ENCODE measurements at regions of chr6 and their contacts with region 1.

Region 1: GRCh38 chr6:26031595-26032339 is 55.5 kb upstream of the HFE start:
- DNase-seq: peak; percentile 80
- ATAC-seq: peak; percentile 67
- H3K4me3 Mint-ChIP-seq: peak overlapping the region; percentile 91
- H3K27ac Mint-ChIP-seq: peak overlapping the region; percentile 100
- H3K4me1 Mint-ChIP-seq: peaks cover 59% of the 10 kb centered on the region
- H3K27me3 Mint-ChIP-seq: no peaks in the 10 kb centered on the region
- CTCF ChIP-seq: no peak

Region 2: DNA sequence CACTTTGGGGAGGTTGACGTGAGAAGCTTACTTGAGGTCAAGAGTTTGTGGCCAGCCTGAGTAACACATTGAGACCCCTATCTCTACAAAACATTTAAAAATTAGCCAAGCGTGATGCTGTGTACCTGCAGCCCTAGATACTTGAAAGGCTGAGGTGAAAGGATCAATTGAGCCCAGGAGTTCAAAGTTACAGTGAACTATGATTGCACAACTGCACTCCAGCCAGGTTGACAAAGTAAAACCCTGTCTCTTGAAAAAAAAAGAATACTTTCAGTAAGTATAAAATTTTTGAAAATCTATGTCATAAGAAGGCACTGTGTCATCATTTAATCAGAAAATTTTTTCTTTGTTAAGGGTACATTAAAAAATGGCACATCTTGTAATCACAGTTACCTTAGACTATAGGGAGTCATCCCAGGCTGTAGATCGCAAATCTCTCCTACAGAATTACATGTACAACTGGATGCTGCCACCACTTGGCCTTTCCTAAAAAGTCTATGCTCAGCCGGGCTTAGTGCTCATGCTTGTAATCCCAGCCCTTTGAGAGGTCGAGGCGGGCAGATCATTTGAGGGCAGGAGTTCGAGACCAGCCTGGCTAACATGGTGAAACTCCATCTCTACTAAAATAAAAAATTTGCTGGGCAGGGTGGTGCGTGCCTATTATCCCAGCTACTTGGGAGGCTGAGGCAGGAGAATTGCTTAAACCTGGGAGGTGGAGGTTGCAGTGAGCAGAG is 1646.1 kb before region 1 on chr6:
- CTCF ChIA-PET with region 1: no interaction called
- POLR2A ChIA-PET with region 1: no interaction called
- DNase-seq: no peak
- ATAC-seq: no peak
- H3K4me3 Mint-ChIP-seq: no peak overlapping the region
- H3K27ac Mint-ChIP-seq: no peak overlapping the region
- H3K4me1 Mint-ChIP-seq: no peaks in the 10 kb centered on the region
- H3K27me3 Mint-ChIP-seq: no peaks in the 10 kb centered on the region
- CTCF ChIP-seq: no peak

Region 3: GRCh38 chr6:26045065-26045927 is 13.5 kb after region 1 on chr6:
- CTCF ChIA-PET with region 1: interaction called, 5 read pairs
- POLR2A ChIA-PET with region 1: interaction called, 365 read pairs
- DNase-seq: peak; percentile 43
- ATAC-seq: peak; percentile 22; the same call in 1 of the 2 replicates
- H3K4me3 Mint-ChIP-seq: peak overlapping the region; percentile 64
- H3K27ac Mint-ChIP-seq: peak overlapping the region; percentile 95
- H3K4me1 Mint-ChIP-seq: peaks cover 42% of the 10 kb centered on the region
- H3K27me3 Mint-ChIP-seq: no peaks in the 10 kb centered on the region
- CTCF ChIP-seq: no peak

Region 4: DNA sequence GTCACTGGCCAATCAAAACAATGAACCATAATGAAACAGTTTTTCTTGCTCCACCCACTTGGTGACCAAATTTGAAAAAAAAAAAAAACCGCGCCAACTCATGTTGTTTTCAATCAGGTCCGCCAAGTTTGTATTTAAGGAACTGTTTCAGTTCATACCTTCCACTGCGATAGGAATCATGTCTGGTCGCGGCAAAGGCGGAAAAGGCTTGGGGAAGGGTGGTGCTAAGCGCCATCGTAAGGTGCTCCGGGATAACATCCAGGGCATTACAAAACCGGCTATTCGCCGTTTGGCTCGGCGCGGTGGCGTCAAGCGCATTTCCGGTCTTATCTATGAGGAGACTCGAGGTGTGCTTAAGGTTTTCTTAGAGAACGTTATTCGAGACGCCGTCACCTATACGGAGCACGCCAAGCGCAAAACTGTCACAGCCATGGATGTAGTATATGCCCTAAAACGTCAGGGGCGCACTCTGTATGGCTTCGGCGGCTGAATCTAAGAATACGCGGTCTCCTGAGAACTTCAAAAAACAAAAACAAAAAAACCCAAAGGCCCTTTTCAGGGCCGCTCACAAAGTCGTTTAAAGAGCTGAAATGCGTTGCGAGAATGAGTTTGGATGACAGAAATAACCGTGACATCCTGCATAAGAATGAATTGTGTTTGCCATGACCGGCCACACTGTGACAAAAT is 72.1 kb after region 1 on chr6:
- CTCF ChIA-PET with region 1: no interaction called
- POLR2A ChIA-PET with region 1: interaction called, 57 read pairs
- DNase-seq: peak; percentile 73
- ATAC-seq: peak; percentile 79
- H3K4me3 Mint-ChIP-seq: peak overlapping the region; percentile 84
- H3K27ac Mint-ChIP-seq: peak overlapping the region; percentile 98
- H3K4me1 Mint-ChIP-seq: peaks cover 23% of the 10 kb centered on the region
- H3K27me3 Mint-ChIP-seq: no peaks in the 10 kb centered on the region
- CTCF ChIP-seq: no peak

Region 5: GRCh38 chr6:27809939-27810767 is 1778.4 kb after region 1 on chr6:
- CTCF ChIA-PET with region 1: no interaction called
- POLR2A ChIA-PET with region 1: interaction called, 49 read pairs
- DNase-seq: peak; percentile 58
- ATAC-seq: peak; percentile 7
- H3K4me3 Mint-ChIP-seq: peak overlapping the region; percentile 98
- H3K27ac Mint-ChIP-seq: peak overlapping the region; percentile 98
- H3K4me1 Mint-ChIP-seq: peaks cover 45% of the 10 kb centered on the region
- H3K27me3 Mint-ChIP-seq: peaks cover 3% of the 10 kb centered on the region
- CTCF ChIP-seq: no peak

Region 6: DNA sequence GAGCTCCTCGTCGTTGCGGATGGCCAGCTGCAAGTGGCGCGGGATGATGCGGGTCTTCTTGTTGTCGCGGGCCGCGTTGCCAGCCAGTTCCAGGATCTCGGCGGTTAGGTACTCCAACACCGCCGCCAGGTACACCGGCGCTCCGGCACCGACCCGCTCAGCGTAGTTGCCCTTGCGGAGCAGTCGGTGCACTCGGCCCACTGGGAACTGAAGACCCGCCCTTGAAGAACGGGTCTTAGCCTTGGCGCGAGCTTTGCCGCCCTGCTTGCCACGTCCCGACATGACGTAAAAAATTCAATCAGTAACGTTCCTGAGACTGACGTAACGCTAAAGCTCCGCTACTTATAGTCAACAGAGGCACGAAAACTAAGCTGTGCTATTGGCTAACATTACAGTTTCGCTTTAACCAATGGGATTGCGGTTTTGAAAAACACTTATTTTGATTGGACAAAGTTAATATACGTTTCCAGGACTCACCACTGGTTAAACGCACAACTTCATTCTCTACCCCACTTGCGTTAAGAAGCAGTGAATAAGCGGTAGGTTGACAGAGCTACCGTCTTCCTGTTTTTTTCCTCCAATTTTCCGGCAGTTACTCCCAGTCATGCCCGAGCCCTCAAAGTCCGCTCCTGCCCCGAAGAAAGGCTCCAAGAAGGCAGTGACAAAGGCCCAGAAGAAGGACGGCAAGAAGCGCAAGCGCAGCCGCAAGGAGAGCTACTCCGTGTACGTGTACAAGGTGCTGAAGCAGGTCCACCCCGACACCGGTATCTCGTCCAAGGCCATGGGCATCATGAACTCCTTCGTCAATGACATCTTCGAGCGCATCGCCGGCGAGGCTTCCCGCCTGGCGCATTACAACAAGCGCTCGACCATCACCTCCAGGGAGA is 1806.5 kb after region 1 on chr6:
- CTCF ChIA-PET with region 1: no interaction called
- POLR2A ChIA-PET with region 1: interaction called, 20 read pairs
- DNase-seq: peak; percentile 84
- ATAC-seq: peak; percentile 84
- H3K4me3 Mint-ChIP-seq: no peak overlapping the region
- H3K27ac Mint-ChIP-seq: no peak overlapping the region
- H3K4me1 Mint-ChIP-seq: peaks cover 28% of the 10 kb centered on the region
- H3K27me3 Mint-ChIP-seq: no peaks in the 10 kb centered on the region
- CTCF ChIP-seq: no peak